H1 (cell line): ENCODE measurements at regions of chr19 and their contacts with region 1.

Region 1: GRCh38 chr19:48403606-48404005 is 10.1 kb downstream of the GRIN2D start:
- DNase-seq: peak in 1 of 2 experiments; percentile 61
- H3K4me3 ChIP-seq: no peak overlapping the region
- H3K27ac ChIP-seq: no peak overlapping the region
- H3K4me1 ChIP-seq: peaks cover 11 to 16% (median 12%) of the 10 kb centered on the region in 4 experiments; a peak in 6 of 7 replicates
- H3K27me3 ChIP-seq: no peaks in the 10 kb centered on the region
- CTCF ChIP-seq: no peak
- EP300 ChIP-seq: no peak
- POLR2A ChIP-seq: no peak
- RAD21 ChIP-seq: no peak

Region 2: DNA sequence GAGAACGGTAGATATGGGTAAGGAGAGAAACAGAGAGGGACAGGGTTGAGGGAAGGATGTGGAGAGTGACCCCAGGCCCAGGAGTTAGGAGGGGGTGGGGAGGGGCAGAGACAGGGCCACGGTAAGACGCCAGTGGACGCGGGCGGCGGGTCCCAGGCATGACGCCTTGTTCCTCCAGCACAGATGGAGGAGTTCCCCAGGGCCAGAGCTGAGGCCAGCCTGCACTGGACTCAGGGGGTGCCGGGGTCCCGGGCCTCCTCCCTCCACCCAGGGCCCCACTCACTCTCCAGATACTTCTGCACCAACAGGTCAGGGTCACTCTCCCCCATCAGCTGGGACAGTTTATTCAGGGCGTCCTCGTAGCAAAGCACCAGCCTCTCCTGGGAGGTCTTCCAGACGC is 100.2 kb before region 1 on chr19:
- CTCF ChIA-PET with region 1: no interaction called
- POLR2A ChIA-PET with region 1: no interaction called
- DNase-seq: no peak
- H3K4me3 ChIP-seq: no peak overlapping the region
- H3K27ac ChIP-seq: no peak overlapping the region
- H3K4me1 ChIP-seq: peaks cover 0 to 2% (median 0%) of the 10 kb centered on the region in 4 experiments; a peak in 1 of 7 replicates
- H3K27me3 ChIP-seq: no peaks in the 10 kb centered on the region
- CTCF ChIP-seq: no peak
- EP300 ChIP-seq: no peak
- POLR2A ChIP-seq: no peak
- RAD21 ChIP-seq: no peak

Region 3: DNA sequence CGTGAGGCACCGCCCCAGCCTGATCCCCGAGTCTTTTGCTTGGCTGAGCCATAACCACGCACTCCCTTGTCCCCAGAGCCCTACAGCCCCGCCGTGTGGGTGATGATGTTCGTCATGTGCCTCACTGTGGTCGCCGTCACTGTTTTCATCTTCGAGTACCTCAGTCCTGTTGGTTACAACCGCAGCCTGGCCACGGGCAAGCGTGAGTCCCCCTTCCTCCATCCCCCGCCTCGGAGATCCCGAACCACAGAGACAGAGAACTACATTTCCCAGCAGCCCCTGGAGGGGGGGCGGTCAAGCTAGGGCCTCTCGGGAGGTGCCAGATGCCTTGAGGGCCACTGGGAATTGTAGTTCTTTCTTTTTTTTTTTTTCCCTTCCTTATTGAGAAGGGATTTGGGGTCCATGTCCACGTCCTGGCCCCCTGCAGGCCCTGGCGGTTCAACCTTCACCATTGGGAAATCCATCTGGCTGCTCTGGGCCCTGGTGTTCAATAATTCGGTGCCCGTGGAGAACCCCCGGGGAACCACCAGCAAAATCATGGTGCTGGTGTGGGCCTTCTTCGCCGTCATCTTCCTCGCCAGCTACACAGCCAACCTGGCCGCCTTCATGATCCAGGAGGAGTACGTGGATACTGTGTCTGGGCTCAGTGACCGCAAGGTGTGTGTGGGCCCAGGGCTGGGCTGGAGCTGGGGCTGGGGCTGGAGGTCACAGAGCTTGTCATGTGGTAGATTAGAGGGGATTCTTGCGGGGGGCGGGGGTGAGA is 15.7 kb after region 1 on chr19:
- CTCF ChIA-PET with region 1: interaction called, 11 read pairs
- POLR2A ChIA-PET with region 1: interaction called, 57 read pairs
- DNase-seq: peak; percentile 49 to 86
- H3K4me3 ChIP-seq: no peak overlapping the region
- H3K27ac ChIP-seq: peak overlapping the region; percentile 54; the same call in 1 of the 2 replicates
- H3K4me1 ChIP-seq: peaks cover 0 to 13% (median 5%) of the 10 kb centered on the region in 4 experiments; a peak in 5 of 7 replicates
- H3K27me3 ChIP-seq: no peaks in the 10 kb centered on the region; a peak in 1 of 7 replicates
- CTCF ChIP-seq: no peak
- EP300 ChIP-seq: no peak
- POLR2A ChIP-seq: no peak
- RAD21 ChIP-seq: no peak